A549 (cell line): ENCODE measurements at regions of chr15 and their contacts with region 1.

Region 1: GRCh38 chr15:40367686-40368611 is 9.9 kb downstream of the DISP2 start:
- DNase-seq: peak; percentile 70 to 87
- ATAC-seq: peak; percentile 88 to 92
- H3K4me3 ChIP-seq: peak overlapping the region; percentile 33
- H3K27ac ChIP-seq: peak overlapping the region; percentile 55 to 87; a peak in 5 of 6 replicates
- H3K4me1 ChIP-seq: 0 out of 3 replicates have a peak, but pooled peaks cover 7% of the 10 kb centered on the region
- CTCF ChIP-seq: peak; percentile 81
- EP300 ChIP-seq: no peak
- POLR2A ChIP-seq: no peak
- RAD21 ChIP-seq: peak; percentile 35 to 62

Region 2: DNA sequence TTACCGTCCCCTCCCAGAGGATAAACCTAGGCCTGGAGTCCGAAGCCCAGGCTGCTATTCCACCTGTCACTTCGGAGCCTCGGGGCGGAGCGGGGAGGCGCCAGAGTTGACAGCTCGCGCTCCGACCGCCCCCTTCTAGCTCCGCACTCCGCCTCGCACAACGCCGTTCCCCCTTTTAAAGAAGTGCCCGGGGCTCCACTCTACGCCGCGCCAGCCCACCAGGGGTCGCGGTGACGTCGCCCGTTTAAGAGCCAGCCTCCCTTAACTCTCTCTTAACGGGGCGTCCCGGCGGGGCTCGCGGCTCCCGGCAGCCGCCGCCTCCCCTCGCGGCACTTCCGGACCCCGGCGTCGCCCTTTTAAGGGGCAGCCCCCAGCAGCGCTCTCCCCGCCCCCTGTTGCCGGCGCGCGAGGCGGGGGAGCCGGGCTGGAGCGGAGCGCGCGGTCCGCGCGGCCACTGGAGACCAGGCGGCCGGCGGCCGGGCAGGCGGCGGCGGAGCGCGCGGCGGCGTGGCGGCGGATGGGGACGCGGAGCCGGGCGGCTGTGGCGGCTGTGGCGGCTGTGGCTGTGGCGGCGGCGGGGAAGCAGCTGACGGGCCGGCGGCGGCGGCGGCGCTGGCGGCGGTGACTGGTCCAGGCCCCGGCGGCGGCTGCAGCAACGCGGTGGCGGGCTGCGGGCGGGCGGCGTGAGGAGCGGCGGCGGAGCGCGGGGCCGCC is 44.6 kb before region 1 on chr15 and contains the start of gene INAFM2:
- CTCF ChIA-PET with region 1: interaction called, 25 read pairs
- POLR2A ChIA-PET with region 1: no interaction called
- DNase-seq: peak; percentile 66 to 77
- ATAC-seq: peak; percentile 74 to 92
- H3K4me3 ChIP-seq: peak within 1 kb of the TSS; percentile 75
- H3K27ac ChIP-seq: peak within 1 kb of the TSS; percentile 73 to 90
- H3K4me1 ChIP-seq: peaks cover 9% of the 10 kb centered on the region; the same call in 1 of the 3 replicates
- CTCF ChIP-seq: peak; percentile 21; the same call in 2 of the 3 replicates
- EP300 ChIP-seq: no peak
- POLR2A ChIP-seq: 0 out of 2 replicates have a peak, but pooled peaks have one; percentile 17
- RAD21 ChIP-seq: no peak
- polyA plus RNA-seq, gene INAFM2: 2.8 and 3.5 TPM in 2 replicates

Region 3: GRCh38 chr15:40357723-40358470 is 10.1 kb before region 1 on chr15 and contains the start of gene DISP2:
- CTCF ChIA-PET with region 1: interaction called, 32 read pairs
- POLR2A ChIA-PET with region 1: no interaction called
- DNase-seq: peak; percentile 69 to 83
- ATAC-seq: peak; percentile 79 to 89
- H3K4me3 ChIP-seq: peak within 1 kb of the TSS; percentile 57
- H3K27ac ChIP-seq: peak within 1 kb of the TSS in 1 of 2 experiments; percentile 77; a peak in 2 of 6 replicates
- H3K4me1 ChIP-seq: peaks cover 6% of the 10 kb centered on the region; the same call in 1 of the 3 replicates
- CTCF ChIP-seq: no peak
- EP300 ChIP-seq: no peak
- POLR2A ChIP-seq: no peak
- RAD21 ChIP-seq: no peak
- polyA plus RNA-seq, gene DISP2: 0.26 and 0.52 TPM in 2 replicates

Region 4: DNA sequence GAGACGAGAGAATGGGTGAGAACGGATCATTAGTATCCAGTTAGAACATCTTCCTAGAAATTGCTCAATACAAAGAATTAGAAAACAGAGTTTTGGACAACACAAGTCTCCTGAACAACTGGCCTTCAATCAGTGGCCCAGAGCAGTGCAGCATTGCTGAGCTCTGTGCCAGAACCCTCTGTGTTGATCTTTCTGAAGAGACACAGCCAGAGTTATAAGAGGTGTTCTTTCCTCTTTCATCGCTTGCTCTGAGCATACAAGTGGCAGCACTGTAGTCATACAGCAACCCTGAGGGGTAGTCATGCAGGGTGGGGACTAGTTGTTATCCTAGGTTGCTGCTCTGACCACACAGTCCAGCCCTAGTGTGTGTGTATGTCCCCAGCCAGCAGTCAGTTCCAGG is 18.5 kb after region 1 on chr15:
- CTCF ChIA-PET with region 1: interaction called, 13 read pairs
- POLR2A ChIA-PET with region 1: no interaction called
- DNase-seq: no peak
- ATAC-seq: no peak
- H3K4me3 ChIP-seq: no peak overlapping the region
- H3K27ac ChIP-seq: no peak overlapping the region
- H3K4me1 ChIP-seq: peaks cover 13% of the 10 kb centered on the region; the same call in 2 of the 3 replicates
- CTCF ChIP-seq: no peak
- EP300 ChIP-seq: no peak
- POLR2A ChIP-seq: no peak
- RAD21 ChIP-seq: no peak

Region 5: GRCh38 chr15:40405501-40406381 is 37.8 kb after region 1 on chr15 and contains the start of gene IVD:
- CTCF ChIA-PET with region 1: interaction called, 16 read pairs
- POLR2A ChIA-PET with region 1: no interaction called
- DNase-seq: peak; percentile 79 to 88
- ATAC-seq: peak; percentile 99
- H3K4me3 ChIP-seq: peak within 1 kb of the TSS; percentile 60
- H3K27ac ChIP-seq: peak within 1 kb of the TSS; percentile 73 to 91
- H3K4me1 ChIP-seq: peaks cover 2% of the 10 kb centered on the region; the same call in 1 of the 3 replicates
- CTCF ChIP-seq: no peak
- EP300 ChIP-seq: no peak
- POLR2A ChIP-seq: peak; percentile 49
- RAD21 ChIP-seq: no peak
- polyA plus RNA-seq, gene IVD: 10.2 and 14.8 TPM in 2 replicates

Region 6: DNA sequence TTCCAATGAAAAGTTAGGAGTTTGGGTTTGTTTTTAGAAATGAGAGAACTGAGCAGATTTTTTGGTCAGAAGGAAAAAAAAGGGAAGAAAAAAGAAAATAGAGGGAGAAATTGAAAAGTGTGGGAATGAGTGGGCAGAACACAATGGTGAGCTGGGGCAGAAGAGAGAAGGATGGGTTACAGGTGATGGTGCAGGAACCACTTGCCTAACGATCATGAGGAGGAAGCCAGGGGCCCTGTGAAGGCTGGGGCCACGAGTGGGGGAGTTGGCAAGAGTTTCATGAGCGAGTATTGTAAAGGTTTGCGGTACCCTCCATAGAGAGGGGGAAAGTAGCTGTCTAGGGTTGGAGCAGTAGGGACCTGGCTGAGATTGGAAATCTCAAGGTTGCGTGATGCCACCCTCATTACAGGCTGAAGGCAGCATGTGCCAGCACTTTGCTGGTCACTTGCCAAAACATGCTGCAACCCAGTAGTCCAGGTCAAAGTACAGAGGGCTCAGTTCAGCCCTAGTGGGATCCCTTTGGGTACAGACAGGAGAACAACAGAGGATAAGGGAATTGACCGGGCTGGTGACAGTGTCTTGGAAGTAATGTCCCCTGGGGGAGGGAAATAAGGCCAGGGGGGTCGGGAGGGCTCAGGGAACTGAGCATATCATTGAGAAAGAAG is 44.3 kb after region 1 on chr15:
- CTCF ChIA-PET with region 1: interaction called, 16 read pairs
- POLR2A ChIA-PET with region 1: no interaction called
- DNase-seq: no peak
- ATAC-seq: no peak
- H3K4me3 ChIP-seq: no peak overlapping the region
- H3K27ac ChIP-seq: no peak overlapping the region
- H3K4me1 ChIP-seq: no peaks in the 10 kb centered on the region
- CTCF ChIP-seq: no peak
- EP300 ChIP-seq: no peak
- POLR2A ChIP-seq: no peak
- RAD21 ChIP-seq: no peak

Region 7: DNA sequence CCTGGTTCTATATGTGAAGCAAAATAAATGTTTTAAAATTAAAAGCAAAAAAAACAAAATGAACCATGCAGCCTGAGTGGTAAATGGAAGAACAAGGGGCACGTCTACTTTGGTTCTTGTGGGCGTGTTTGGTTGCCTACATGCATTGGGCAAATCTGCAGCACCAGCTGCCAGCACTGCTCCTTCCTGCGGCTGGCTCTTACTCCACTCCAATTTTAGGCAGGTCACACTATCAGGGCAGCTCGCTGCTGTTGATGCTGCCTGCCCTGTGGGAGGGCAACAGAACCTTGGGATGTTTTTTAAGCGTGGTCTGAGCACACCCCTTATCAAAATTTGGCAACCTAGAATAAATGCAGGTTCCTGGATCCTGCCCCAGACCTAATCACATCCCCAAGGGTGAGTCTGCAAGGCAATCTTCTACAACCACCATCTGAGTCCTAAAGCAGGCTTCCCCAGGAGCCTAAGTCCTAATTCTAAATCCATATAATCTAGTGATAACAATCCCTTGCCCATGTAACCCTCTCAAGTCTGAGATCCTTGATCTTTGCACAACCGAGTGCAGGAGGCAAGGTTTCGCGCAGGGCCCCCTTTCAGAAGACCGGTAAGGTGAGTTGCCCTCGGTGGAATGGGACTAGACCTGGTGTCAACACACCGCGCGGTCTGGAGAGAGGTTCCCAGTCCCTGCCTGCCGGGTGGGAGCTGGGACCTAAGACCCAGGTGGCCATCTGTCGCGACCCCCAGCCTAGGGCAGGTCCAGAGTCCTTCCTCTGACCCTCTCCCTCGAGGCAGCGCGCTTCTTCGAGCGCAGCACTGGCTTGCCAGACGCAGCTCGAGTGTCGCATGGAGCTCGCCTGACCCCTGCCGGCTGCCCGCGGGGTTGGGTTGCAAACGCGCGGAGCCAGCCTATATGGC is 53.6 kb after region 1 on chr15:
- CTCF ChIA-PET with region 1: interaction called, 43 read pairs
- POLR2A ChIA-PET with region 1: no interaction called
- DNase-seq: peak; percentile 55 to 63
- ATAC-seq: peak; percentile 97
- H3K4me3 ChIP-seq: no peak overlapping the region
- H3K27ac ChIP-seq: no peak overlapping the region
- H3K4me1 ChIP-seq: peaks cover 4% of the 10 kb centered on the region; the same call in 2 of the 3 replicates
- CTCF ChIP-seq: peak; percentile 68
- EP300 ChIP-seq: no peak
- POLR2A ChIP-seq: no peak
- RAD21 ChIP-seq: peak; percentile 81 to 85